WTC11 (cell line): ENCODE measurements at regions of chr5 and their contacts with region 1.

Region 1: DNA sequence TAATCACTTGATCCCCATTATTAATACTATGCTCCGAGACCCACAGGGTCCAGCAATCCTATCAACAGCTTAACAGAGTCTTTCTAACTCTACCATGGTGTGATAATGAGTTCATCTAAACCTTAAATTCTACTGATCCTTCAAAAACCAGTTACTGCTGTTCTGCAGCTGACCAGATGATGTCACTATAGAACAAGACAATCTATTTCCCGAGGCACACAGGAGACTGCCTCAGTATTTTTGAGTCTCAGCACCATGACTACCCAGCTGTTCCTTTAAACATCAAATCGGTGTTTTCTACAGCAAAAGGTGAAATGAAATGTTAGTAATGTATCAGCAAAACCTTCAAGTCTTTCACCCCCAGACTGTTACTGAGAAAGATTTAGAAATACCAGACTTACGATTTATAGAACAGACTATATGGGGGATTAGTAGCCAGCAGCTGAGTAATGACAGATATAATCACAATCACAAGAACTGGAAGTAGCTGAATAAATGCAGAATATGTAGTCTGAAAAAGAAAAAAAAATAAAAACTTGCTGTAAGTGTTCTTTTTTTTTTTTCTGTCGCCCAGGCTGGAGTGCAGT is 16.9 kb downstream of the DNAJC18 start:
- DNase-seq: no peak
- ATAC-seq: peak; percentile 89
- H3K4me3 Mint-ChIP-seq: no peak overlapping the region
- H3K27ac Mint-ChIP-seq: peak overlapping the region; percentile 60; the same call in 1 of the 2 replicates
- H3K4me1 Mint-ChIP-seq: peaks cover 9% of the 10 kb centered on the region
- H3K27me3 Mint-ChIP-seq: no peaks in the 10 kb centered on the region; the same call in 1 of the 2 replicates
- CTCF ChIP-seq: no peak

Region 2: DNA sequence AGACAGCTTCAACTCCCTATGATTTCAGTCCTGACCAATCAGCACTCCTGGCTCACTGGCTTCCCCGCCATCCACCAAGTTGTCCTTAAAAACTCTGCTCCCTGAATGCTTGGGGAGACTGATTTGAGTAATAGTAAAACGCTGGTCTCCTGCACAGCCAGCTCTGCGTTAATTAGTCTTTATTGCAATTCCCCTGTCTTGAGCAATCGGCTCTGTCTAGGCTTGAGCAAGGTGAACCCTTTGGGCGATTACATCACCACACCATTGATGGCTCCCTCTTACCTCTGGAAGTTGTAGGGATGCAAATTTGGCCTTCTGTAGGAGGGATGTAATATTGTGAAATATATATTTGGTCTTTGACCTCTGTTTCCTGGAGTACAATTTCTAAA is 36.4 kb before region 1 on chr5:
- CTCF ChIA-PET with region 1: no interaction called
- POLR2A ChIA-PET with region 1: no interaction called
- DNase-seq: no peak
- ATAC-seq: no peak
- H3K4me3 Mint-ChIP-seq: no peak overlapping the region
- H3K27ac Mint-ChIP-seq: no peak overlapping the region
- H3K4me1 Mint-ChIP-seq: peaks cover 17% of the 10 kb centered on the region
- H3K27me3 Mint-ChIP-seq: peaks cover 8% of the 10 kb centered on the region; the same call in 1 of the 2 replicates
- CTCF ChIP-seq: no peak

Region 3: GRCh38 chr5:139439013-139439903 is 16.9 kb after region 1 on chr5 and contains the start of gene DNAJC18:
- CTCF ChIA-PET with region 1: interaction called, 25 read pairs
- POLR2A ChIA-PET with region 1: no interaction called
- DNase-seq: peak; percentile 97
- ATAC-seq: peak; percentile 93
- H3K4me3 Mint-ChIP-seq: peak within 1 kb of the TSS; percentile 95
- H3K27ac Mint-ChIP-seq: peak within 1 kb of the TSS; percentile 99
- H3K4me1 Mint-ChIP-seq: peaks cover 31% of the 10 kb centered on the region
- H3K27me3 Mint-ChIP-seq: peaks cover 4% of the 10 kb centered on the region; the same call in 1 of the 2 replicates
- CTCF ChIP-seq: no peak
- total RNA-seq, gene DNAJC18: 23.7 to 29.1 TPM (median 28.9 TPM) in 3 replicates

Region 4: DNA sequence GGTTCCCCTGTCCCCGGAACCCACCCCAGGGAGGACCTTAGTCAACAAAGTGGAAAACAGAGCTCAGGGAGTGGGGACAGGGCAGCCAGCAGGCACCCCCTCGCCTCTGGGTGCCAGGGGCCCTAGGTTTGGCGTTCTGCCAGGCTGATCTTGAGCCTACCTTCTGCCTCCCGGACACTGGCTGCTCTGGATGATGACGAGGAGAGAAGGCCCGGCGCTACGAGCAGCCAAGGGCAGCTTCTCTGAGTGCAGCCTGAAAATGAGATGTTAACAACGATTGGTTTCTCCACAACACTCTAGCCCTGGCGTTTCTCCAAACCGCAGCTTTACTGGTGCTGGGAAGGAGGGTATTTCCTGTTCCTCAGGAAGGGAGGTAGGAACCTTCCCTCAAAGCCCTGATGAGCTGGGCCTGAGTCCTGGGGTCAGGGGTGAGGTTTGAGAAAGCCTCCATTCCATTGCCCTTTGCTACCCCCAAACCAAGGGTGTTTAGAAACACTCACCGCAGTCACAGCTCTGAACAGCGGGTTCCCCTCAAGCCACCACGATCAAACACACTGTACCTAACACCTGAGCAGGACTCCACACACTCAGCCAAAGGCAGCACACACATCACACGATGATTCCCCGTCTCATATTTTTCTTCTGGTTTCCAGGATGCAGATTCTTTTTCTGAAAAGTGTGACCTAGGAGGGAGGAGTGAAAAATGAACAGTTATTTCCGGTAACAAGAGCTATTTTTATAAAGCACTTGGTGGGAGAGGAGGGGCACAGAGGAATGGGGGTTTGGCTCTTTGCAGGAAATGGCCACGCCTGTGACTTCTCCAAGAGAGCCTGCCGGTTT is 59.9 kb after region 1 on chr5 and contains the start of gene STING1:
- CTCF ChIA-PET with region 1: interaction called, 12 read pairs
- POLR2A ChIA-PET with region 1: no interaction called
- DNase-seq: no peak
- ATAC-seq: no peak
- H3K4me3 Mint-ChIP-seq: no peak within 1 kb of the TSS
- H3K27ac Mint-ChIP-seq: peak within 1 kb of the TSS; percentile 53
- H3K4me1 Mint-ChIP-seq: peaks cover 20% of the 10 kb centered on the region
- H3K27me3 Mint-ChIP-seq: no peaks in the 10 kb centered on the region
- CTCF ChIP-seq: no peak
- total RNA-seq, gene STING1: 0.37 to 1.6 TPM (median 0.64 TPM) in 3 replicates

Region 5: DNA sequence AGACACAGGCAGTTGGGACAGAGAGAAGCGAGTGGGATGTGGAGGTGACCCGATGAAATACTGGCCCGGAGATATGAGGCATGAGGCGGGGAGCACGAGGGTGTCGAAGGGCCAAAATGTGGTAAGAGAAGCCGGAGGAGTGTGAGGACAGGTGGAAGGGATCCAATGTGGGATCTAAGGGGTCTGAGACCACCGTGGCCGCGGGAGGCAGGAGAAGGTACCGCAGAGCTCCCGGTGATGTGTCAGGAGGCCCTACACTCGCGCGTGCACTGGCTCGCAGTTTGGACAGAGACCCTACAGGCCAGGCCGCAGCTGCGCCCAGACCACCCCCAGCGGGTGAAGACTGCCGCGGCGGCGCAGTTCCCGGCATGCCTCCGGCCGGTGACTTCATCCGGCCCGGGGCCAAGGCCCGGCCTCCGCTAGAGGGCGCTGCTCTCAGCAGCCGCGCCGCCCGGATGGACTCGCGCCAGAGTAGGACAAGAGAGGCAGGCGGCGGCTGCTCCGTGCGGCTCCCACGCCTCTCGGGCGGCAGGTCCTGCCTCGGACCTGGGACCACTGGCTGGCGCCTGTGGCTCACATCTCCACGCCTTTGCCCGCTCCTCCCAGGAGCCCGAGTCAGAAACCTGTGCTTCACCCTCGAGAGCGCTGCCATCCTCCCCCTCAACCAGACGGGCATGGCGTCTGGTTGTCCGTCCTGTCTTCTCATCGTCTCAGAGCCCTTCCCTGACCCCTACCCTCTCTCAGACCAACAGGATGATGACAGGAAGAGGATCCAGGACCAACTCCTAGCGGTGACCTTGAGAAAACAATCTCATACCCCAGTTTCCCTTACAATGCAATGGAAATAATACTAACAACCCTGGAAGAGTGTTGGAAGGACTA is 95.5 kb after region 1 on chr5:
- CTCF ChIA-PET with region 1: interaction called, 208 read pairs
- POLR2A ChIA-PET with region 1: interaction called, 3 read pairs
- DNase-seq: peak; percentile 95
- ATAC-seq: peak; percentile 87
- H3K4me3 Mint-ChIP-seq: peak overlapping the region; percentile 61
- H3K27ac Mint-ChIP-seq: peak overlapping the region; percentile 82; the same call in 1 of the 2 replicates
- H3K4me1 Mint-ChIP-seq: peaks cover 33% of the 10 kb centered on the region
- H3K27me3 Mint-ChIP-seq: peaks cover 24% of the 10 kb centered on the region
- CTCF ChIP-seq: peak; percentile 97

Region 6: DNA sequence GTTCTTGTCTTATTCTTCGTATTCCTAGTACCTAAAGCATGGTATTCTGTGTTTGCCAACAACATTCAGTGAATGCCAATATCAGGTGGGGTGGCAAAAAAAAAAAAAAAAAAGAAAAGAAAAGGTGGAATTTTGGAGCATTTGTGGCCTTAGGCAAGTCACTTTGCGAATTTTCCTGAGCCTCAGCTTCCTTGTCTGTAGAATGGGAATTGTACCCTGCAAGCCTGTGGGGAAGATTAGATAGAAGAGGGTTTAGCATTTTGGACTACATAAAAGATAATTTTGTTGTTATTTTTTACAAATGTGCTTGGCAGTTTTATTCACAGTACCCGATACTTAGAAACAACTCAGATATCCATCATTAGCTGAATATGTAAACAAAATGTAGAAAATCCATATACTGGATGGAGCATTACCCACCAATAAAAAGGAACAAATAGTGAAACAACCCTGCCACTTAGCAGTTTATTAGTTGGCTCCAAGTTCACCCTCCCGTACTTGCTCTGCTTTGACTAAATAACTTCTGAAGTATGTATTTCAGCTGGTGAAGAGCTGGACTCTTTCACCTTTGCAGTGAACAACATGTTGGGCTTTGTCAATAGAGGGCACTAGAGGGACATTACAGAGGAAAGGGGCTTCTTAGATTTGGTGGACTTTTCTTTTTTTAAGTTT is 152.4 kb after region 1 on chr5:
- CTCF ChIA-PET with region 1: interaction called, 13 read pairs
- POLR2A ChIA-PET with region 1: interaction called, 3 read pairs
- DNase-seq: no peak
- ATAC-seq: peak; percentile 74
- H3K4me3 Mint-ChIP-seq: no peak overlapping the region
- H3K27ac Mint-ChIP-seq: peak overlapping the region; percentile 96
- H3K4me1 Mint-ChIP-seq: peaks cover 32% of the 10 kb centered on the region
- H3K27me3 Mint-ChIP-seq: no peaks in the 10 kb centered on the region
- CTCF ChIP-seq: no peak